ENCODE measurements at regions of chr11 and their contacts with region 1.

Region 1: GRCh38 chr11:10091314-10092045 is 202.5 kb downstream of the SBF2 start:
- DNase-seq: no peak
- ATAC-seq: no peak
- H3K4me3 Mint-ChIP-seq: no peak overlapping the region
- H3K27ac Mint-ChIP-seq: no peak overlapping the region
- H3K4me1 Mint-ChIP-seq: peaks cover 14% of the 10 kb centered on the region
- H3K27me3 Mint-ChIP-seq: no peaks in the 10 kb centered on the region

Region 2: GRCh38 chr11:10026514-10026913 is 65.0 kb before region 1 on chr11:
- CTCF ChIA-PET with region 1: no interaction called
- DNase-seq: no peak
- ATAC-seq: no peak
- H3K4me3 Mint-ChIP-seq: no peak overlapping the region
- H3K27ac Mint-ChIP-seq: no peak overlapping the region
- H3K4me1 Mint-ChIP-seq: peaks cover under 1% of the 10 kb centered on the region
- H3K27me3 Mint-ChIP-seq: no peaks in the 10 kb centered on the region

Region 3: GRCh38 chr11:10076458-10077141 is 14.9 kb before region 1 on chr11:
- CTCF ChIA-PET with region 1: interaction called, 10 read pairs
- DNase-seq: peak; percentile 48
- ATAC-seq: no peak
- H3K4me3 Mint-ChIP-seq: no peak overlapping the region
- H3K27ac Mint-ChIP-seq: no peak overlapping the region
- H3K4me1 Mint-ChIP-seq: no peaks in the 10 kb centered on the region
- H3K27me3 Mint-ChIP-seq: no peaks in the 10 kb centered on the region

Region 4: GRCh38 chr11:10208131-10208575 is 116.7 kb after region 1 on chr11:
- CTCF ChIA-PET with region 1: no interaction called
- DNase-seq: no peak
- ATAC-seq: peak; percentile 63
- H3K4me3 Mint-ChIP-seq: no peak overlapping the region
- H3K27ac Mint-ChIP-seq: no peak overlapping the region
- H3K4me1 Mint-ChIP-seq: no peaks in the 10 kb centered on the region
- H3K27me3 Mint-ChIP-seq: peaks cover 9% of the 10 kb centered on the region

Measured in activated CD8-positive, alpha-beta memory T cell treated with anti-CD3 and anti-CD28 coated beads, Interleukin-2, amount 10 ng/mL, durations not matched to agents 7 days and 5 days (primary cell).